ENCODE measurements at regions of chr11 and their contacts with region 1.

Region 1: DNA sequence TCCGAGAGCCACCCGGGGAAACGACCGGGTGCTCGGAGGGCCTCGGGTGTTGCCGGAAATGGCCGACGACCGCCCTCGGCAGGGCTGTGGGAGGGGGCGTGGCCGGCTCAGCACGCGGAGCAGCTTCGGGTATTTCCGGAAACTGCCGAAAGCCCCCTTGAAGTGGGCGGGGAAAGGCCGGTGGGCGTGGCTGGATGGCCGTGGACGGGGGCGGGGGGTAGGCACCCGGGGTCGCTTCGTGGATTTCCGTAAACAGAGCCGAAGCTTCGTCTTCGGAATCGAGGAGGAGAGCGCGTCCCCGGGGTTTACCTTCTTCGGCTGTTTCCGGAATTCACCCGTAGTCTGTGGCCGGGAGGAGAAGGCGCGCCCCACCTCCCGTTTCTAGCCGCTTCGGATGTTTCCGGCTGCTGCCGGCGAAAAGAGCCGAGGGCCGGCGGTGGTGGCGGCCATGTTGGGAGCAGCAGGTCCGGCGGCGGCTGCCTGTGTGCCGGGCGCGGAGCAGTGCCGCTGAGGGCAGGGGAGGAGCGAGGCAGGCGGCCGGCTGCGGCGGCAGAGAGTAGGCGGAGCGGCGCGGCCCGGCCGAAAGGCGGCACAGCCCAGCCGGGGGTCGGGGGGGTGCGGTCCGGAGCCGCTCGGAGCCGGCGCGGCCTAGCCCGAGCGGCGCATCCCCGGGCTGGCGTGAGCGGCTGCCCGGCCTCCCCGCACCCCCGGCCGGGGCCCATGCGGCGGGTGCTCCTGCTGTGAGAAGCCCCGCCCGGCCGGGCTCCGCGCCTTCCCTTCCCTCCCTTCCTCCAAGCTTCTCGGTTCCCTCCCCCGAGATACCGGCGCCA is at the start of gene MARK2:
- DNase-seq: peak; percentile 99
- total RNA-seq, gene MARK2: 20.5 to 24.5 TPM

Region 2: GRCh38 chr11:63395697-63396096 is 443.2 kb before region 1 on chr11:
- intact Hi-C with region 1: no loop called
- DNase-seq: no peak

Region 3: DNA sequence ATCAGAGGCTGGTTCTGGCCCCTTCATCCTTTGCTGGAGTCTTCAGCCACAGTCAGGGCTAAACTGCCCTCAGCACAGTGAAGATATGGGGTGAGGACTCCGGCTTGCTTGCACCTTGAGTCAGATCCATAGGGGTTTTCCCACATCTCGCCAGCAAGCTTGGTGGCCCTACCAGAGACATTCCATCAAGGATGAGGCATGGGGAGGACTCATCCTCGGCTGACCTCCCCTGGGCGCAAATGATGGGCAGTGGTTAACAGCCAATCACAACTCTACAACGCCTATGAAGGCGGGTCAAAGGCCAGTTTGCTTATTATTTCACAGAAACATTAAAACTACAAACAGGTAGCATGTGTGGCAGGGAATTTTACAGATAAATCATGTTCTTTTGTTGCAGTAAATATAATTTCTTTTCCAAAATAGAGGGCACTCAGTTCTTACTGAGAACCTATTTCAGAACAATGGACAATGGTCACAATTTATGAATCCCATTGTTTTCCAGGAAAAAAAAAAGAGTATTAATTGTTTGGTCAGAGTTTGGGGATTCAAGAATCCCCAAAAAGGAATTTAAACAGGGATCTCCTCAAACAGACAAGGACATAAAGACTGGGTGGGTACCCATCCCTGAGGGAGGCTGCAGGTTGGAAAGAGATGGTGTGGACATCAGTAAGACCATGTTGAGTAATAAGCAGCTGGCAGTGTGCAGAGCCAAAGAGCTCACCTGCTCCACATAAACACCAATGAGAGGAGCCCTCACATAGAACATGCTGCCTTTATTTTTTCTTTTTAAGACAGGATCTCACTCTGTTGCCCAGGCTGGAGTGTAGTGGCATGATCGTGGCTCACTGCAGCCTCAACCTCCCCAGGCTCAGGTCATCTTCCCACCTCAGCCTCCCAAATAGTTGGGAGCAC is 239.4 kb before region 1 on chr11:
- intact Hi-C with region 1: no loop called
- DNase-seq: peak; percentile 32

Region 4: GRCh38 chr11:63945477-63946163 is 106.7 kb after region 1 on chr11:
- intact Hi-C with region 1: loop called (anchors 1 kb)
- DNase-seq: peak; percentile 87

Region 5: DNA sequence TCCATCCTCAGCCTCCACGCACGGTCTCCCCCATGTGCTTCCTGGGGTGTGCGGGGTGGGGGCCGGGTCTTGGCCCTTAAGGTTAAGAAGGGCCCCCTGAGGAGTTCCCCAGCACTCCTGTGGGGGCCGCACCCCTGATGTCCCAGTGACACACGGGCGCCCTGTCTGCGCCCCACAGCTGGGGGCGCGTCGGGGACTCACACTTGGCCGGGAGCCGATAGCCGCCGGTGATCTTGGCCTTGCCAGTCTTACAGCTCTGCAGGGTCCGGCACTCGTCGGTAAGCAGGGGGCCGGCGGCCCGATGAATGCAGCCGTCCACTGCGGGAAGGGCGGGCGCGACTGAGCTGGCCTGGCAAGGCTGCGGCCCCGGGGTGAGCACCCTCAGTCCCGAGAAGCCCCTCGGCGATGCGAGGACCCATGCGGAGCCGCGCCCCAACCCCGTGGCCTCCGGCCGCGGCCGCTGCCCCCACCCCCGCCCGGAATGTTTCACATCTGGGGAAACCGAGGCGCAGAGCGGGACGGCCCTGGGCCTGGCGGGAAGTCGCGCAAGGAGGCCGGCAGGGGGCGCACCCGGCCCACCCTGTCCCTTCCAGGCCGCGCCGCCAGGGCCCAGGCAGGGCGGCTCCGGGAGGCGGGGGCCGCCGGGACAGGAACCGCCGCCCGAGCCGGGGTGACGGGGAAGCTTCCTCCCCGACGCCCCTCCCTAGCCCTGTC is 161.3 kb after region 1 on chr11:
- intact Hi-C with region 1: no loop called
- DNase-seq: peak; percentile 90

Region 6: DNA sequence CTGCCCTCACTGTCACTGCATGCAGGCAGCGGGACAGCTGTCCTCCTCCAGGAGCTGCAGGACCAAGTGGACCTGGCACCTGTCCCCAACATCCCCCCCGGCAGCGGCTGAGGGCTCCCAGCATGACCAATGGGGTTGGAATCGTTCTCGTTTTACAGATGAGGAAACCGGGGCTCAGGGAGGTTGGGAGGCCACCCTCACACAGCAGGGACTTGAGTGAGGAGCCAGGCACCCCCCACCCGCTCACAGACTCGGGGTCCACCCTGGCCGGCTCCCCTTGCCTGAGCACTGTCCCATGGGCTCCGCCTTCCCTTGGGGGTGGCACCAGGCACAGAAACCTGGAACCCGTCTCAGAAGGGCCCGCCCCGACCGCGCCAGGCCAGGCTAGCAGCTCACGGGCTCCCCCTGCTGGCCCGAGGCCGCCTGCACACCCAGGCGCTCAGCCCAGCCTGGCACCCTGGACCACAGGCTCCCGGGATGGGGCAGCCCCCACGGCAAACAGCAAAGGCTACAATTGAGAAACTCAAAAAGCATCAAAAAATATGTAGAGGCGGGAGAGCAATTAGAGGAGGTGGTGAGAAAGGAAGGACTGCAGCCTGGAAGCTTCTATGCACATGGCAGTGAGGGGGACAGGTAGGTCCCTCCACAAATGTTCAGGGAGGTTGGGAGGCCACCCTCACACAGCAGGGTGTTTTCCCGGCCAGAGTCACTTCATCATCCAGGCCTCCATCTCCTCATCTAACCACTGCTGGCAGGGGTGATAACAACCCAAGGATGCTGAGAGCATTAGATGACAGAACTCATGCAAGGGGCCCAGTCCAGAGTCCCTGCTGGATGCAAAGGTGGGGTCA is 314.2 kb after region 1 on chr11:
- intact Hi-C with region 1: loop called (anchors 5 to 10 kb)
- DNase-seq: peak; percentile 90

Region 7: GRCh38 chr11:64996710-64997380 is 1158.0 kb after region 1 on chr11 and contains the start of gene BATF2:
- intact Hi-C with region 1: no loop called
- DNase-seq: peak; percentile 90
- total RNA-seq, gene BATF2: 1.7 to 1.8 TPM

Measured in posterior vena cava (tissue), 2 donors.